Tibial artery (tissue), 4 donors: ENCODE measurements at regions of chr7 and their contacts with region 1.

Region 1: DNA sequence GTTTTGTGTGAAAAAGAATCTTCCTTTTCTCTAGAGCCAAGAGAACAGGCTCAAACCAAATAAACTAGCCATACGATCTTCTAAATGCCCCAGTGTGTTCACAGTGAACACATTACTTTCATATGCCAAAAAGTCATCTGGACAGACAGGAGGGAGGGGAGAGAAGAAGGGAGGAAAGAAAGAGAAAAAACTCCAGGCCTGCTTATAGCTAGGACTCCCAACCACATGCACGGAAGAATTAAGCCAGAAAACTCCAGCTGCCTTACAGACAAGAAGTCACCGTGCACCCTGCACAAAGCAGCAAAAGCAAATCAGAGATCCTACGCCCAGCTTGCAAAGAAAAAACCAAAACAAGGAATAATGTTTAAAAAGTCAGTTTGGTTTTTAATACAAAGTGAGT is 34.3 kb downstream of the SNX8 start:
- DNase-seq: no peak
- H3K4me3 ChIP-seq: no peak overlapping the region
- H3K27ac ChIP-seq: no peak overlapping the region
- H3K4me1 ChIP-seq: no peaks in the 10 kb centered on the region
- H3K27me3 ChIP-seq: no peaks in the 10 kb centered on the region
- CTCF ChIP-seq: no peak

Region 2: GRCh38 chr7:1251796-1252545 is 1027.9 kb before region 1 on chr7:
- intact Hi-C with region 1: loop called (anchors 10 kb)
- DNase-seq: no peak
- H3K4me3 ChIP-seq: no peak overlapping the region
- H3K27ac ChIP-seq: no peak overlapping the region
- H3K4me1 ChIP-seq: peaks cover 0 to 26% (median 17%) of the 10 kb centered on the region in 4 donors
- H3K27me3 ChIP-seq: peaks cover 7 to 100% of the 10 kb centered on the region in 2 donors
- CTCF ChIP-seq: no peak

Region 3: GRCh38 chr7:2063575-2064257 is 216.2 kb before region 1 on chr7:
- intact Hi-C with region 1: no loop called
- DNase-seq: no peak
- H3K4me3 ChIP-seq: no peak overlapping the region
- H3K27ac ChIP-seq: no peak overlapping the region
- H3K4me1 ChIP-seq: no peaks in the 10 kb centered on the region
- H3K27me3 ChIP-seq: no peaks in the 10 kb centered on the region
- CTCF ChIP-seq: no peak